ENCODE measurements at regions of chr4 and their contacts with region 1.

Region 1: DNA sequence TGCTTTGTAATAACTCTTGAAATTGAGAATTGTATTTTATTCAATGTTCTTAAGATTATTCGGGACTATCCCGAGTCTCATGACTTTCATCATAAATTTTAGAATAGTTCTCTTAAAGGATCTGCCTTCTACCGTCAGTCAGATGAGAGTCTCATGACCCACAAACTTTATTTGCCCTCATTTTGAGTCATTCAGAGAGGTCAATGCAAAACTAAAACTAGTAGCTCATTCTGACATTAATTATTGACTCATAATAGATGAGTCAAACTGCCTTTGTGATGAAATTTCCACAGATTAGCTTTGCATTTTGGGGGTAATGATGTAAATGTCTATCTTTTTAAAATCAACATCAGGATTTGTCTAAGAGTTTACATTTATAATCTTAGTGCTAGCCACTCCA is 1527.3 kb downstream of the TECRL start:
- DNase-seq: no peak
- H3K4me3 ChIP-seq: no peak overlapping the region
- H3K27ac ChIP-seq: no peak overlapping the region
- H3K4me1 ChIP-seq: no peaks in the 10 kb centered on the region
- H3K27me3 ChIP-seq: no peaks in the 10 kb centered on the region
- CTCF ChIP-seq: no peak
- EP300 ChIP-seq: no peak
- POLR2A ChIP-seq: no peak

Region 2: DNA sequence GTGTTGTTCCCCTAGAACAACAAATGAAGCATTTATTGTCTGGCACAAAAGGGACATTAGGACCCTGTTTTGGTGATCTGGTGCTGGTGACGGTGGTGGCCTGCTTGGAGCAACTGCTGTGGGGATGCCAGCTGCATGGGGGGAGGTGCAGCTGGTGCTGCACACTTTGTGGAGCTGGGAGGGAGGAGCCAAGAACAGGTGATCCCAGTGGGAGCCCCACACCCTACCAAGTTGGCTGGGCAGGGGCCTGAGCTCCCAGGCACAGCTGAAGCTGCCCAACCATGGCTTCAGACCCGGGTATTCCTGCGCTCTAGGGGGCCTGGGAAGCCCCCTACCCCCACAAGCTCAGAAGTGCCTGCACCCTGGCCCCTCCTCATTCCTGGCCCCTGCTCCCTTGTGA is 14.8 kb after region 1 on chr4:
- intact Hi-C with region 1: loop called (anchors 1 kb)
- DNase-seq: no peak
- H3K4me3 ChIP-seq: no peak overlapping the region
- H3K27ac ChIP-seq: no peak overlapping the region
- H3K4me1 ChIP-seq: no peaks in the 10 kb centered on the region
- H3K27me3 ChIP-seq: no peaks in the 10 kb centered on the region
- CTCF ChIP-seq: no peak
- EP300 ChIP-seq: no peak
- POLR2A ChIP-seq: no peak

Region 3: GRCh38 chr4:62917649-62918048 is 35.7 kb after region 1 on chr4:
- intact Hi-C with region 1: no loop called
- DNase-seq: no peak
- H3K4me3 ChIP-seq: no peak overlapping the region
- H3K27ac ChIP-seq: no peak overlapping the region
- H3K4me1 ChIP-seq: no peaks in the 10 kb centered on the region
- H3K27me3 ChIP-seq: no peaks in the 10 kb centered on the region
- CTCF ChIP-seq: no peak
- EP300 ChIP-seq: no peak
- POLR2A ChIP-seq: no peak